Activated B cell treated with CpG ODN at 0.5 μM for 24 hours (primary cell): ENCODE measurements at regions of chr1 and their contacts with region 1.

Region 1: DNA sequence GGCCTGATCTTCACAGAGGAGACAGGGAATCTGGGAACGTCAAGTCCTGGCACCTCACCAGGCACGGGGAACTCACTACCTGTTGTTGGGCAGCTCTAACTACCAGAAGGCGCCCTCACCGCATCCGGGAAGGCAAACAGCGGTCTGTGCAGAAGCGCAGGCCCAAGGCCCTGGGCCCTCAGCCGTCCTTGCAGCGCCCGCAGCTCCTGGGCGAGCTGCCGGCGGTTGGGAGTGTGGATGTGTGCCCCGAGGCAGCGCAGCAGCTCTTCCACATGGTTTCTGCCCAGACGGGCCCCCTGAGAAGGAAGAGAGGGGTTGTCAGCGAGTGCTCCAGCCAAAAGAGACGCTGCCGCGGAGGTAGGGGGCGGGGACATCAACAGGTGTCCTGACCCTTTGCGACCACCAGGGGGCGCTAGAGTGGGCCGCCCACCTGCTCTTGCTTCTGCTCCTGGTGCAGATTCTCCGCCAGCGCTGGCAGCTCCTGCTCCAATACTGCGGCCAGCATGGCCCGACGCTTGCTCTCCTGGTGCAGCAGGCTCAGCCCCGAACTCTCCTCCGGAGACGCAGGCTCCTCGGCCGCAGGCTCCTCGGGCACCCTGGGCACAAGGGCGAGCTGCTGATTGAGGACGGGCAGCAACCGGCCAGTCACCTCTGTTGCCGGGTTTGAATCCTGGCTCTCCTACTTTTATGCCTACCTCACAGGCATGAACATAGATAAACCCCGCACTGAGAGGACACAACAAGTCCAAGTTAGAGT is 9.3 kb downstream of the MAP3K6 start:
- DNase-seq: peak; percentile 80
- ATAC-seq: peak; percentile 66
- H3K4me3 Mint-ChIP-seq: peak overlapping the region; percentile 76
- H3K27ac Mint-ChIP-seq: peak overlapping the region; percentile 56
- H3K4me1 Mint-ChIP-seq: peaks cover 46% of the 10 kb centered on the region
- H3K27me3 Mint-ChIP-seq: no peaks in the 10 kb centered on the region
- CTCF ChIP-seq: peak; percentile 69

Region 2: GRCh38 chr1:27321813-27322577 is 35.5 kb before region 1 on chr1 and contains the start of gene TMEM222:
- CTCF ChIA-PET with region 1: interaction called, 9 read pairs
- POLR2A ChIA-PET with region 1: interaction called, 11 read pairs
- intact Hi-C with region 1: loop called (anchors 1 kb)
- DNase-seq: peak; percentile 99
- ATAC-seq: peak; percentile 95
- H3K4me3 Mint-ChIP-seq: peak within 1 kb of the TSS; percentile 97
- H3K27ac Mint-ChIP-seq: peak within 1 kb of the TSS; percentile 93
- H3K4me1 Mint-ChIP-seq: peaks cover 51% of the 10 kb centered on the region
- H3K27me3 Mint-ChIP-seq: no peaks in the 10 kb centered on the region
- CTCF ChIP-seq: no peak
- total RNA-seq, gene TMEM222: 39.3 and 43.0 TPM in 2 replicates

Region 3: DNA sequence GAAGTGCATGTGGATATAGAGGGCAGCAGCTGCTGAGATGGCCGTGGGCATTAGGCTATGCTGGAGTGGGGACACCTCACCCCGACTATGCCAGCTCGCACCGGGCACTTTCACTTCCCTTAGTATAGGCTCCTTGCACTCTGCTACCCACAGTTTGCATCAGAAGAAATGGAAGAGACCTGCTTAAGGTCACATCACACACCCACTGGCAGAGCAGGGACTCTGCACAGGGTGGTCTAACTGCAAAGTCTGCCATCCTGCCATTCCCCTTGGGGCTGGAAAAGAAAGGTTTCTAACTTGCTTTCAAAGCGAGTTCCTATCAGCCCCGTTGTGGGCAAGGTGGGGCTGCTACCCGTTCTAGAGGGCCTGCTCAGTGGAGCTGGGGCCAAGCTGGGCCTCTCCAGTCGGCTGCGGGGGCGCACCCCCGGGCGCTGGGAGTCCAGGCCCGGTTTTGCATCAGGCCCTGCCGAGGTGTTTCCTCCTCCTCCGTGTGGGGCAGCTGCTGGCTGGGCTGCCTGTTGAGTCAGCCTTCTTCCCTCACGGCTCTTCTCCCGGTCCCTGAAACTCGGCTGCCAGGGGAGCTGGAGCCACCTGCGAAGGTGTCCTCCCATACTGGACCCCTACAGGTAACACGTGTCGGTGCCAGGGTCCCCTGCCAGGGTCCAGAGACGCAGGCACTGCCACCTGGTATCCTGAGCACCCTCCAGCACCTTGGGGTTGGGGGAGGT is 15.8 kb before region 1 on chr1 and contains the start of gene SYTL1:
- CTCF ChIA-PET with region 1: interaction called, 8 read pairs
- POLR2A ChIA-PET with region 1: interaction called, 75 read pairs
- intact Hi-C with region 1: loop called (anchors 1 kb)
- DNase-seq: peak; percentile 72
- ATAC-seq: peak; percentile 76
- H3K4me3 Mint-ChIP-seq: peak within 1 kb of the TSS; percentile 80
- H3K27ac Mint-ChIP-seq: peak within 1 kb of the TSS; percentile 87
- H3K4me1 Mint-ChIP-seq: peaks cover 67% of the 10 kb centered on the region
- H3K27me3 Mint-ChIP-seq: no peaks in the 10 kb centered on the region
- CTCF ChIP-seq: no peak
- total RNA-seq, gene SYTL1: 76.0 and 81.9 TPM in 2 replicates

Region 4: GRCh38 chr1:27383039-27383605 is 25.7 kb after region 1 on chr1 and contains the start of gene CD164L2:
- CTCF ChIA-PET with region 1: interaction called, 43 read pairs
- POLR2A ChIA-PET with region 1: interaction called, 3 read pairs
- intact Hi-C with region 1: loop called (anchors 1 kb)
- DNase-seq: no peak
- ATAC-seq: peak; percentile 60
- H3K4me3 Mint-ChIP-seq: no peak within 1 kb of the TSS
- H3K27ac Mint-ChIP-seq: no peak within 1 kb of the TSS
- H3K4me1 Mint-ChIP-seq: peaks cover 6% of the 10 kb centered on the region
- H3K27me3 Mint-ChIP-seq: peaks cover 2% of the 10 kb centered on the region
- CTCF ChIP-seq: no peak
- total RNA-seq, gene CD164L2: 0.16 TPM in 1 of 2 replicates, not detected in the other